Left colon (tissue), 2 donors: ENCODE measurements at regions of chr19 and their contacts with region 1.

Region 1: GRCh38 chr19:3984908-3985642 is at the start of gene EEF2:
- DNase-seq: peak; percentile 86 to 93
- ATAC-seq: peak; percentile 64
- total RNA-seq, gene EEF2: 1,955 to 2,053 TPM

Region 2: DNA sequence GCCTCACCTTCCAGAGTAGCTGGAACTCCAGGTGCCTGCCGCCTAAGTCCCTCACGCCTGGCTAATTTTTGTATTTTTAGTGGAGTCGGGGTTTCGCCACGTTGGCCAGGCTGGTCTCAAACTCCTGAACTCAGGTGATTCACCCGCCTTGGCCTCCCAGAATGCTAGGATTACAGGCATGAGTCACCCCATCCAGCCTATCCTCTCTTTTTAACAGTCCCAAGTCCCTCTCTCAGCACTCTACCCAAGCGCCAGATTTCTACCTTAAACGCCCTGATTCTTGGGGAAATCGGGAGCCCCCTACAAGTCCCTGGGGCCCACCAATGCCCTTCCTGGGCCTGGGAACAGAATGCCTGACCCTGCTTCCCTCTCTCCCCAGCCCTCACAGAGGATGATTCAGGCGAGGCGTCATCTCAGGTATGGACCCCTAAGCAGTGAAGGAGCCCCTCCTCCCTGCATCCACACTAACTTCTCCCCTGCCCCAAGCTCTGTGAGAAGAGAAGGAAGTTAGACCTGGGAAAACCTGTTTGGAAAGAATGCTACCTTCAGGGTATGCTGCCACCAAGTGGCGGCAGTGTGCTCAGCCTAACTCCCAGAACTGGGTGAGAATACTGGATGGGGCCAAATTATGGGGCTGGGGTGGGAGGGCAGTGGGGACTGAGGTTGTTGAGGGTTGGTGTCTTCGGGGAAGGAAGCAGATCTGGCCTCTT is 223.5 kb after region 1 on chr19:
- intact Hi-C with region 1: loop called in 1 of 2 experiments (anchors 10 kb)
- DNase-seq: peak in 1 of 2 donors; percentile 59
- ATAC-seq: peak; percentile 82